CD8-positive, alpha-beta T cell (primary cell): ENCODE measurements at regions of chr11 and their contacts with region 1.

Region 1: GRCh38 chr11:535519-536454 is at the start of gene HRAS:
- DNase-seq: peak; percentile 92 to 98 (median 97)
- ATAC-seq: peak; percentile 88
- H3K4me3 ChIP-seq: peak within 1 kb of the TSS; percentile 60 to 66
- H3K4me3 Mint-ChIP-seq: peak within 1 kb of the TSS; percentile 93
- H3K27ac ChIP-seq: peak within 1 kb of the TSS; percentile 73 to 89
- H3K27ac Mint-ChIP-seq: peak within 1 kb of the TSS; percentile 95
- H3K4me1 ChIP-seq: peaks cover 28% of the 10 kb centered on the region
- H3K4me1 Mint-ChIP-seq: peaks cover 24% of the 10 kb centered on the region
- H3K27me3 ChIP-seq: no peaks in the 10 kb centered on the region
- H3K27me3 Mint-ChIP-seq: no peaks in the 10 kb centered on the region
- CTCF ChIP-seq: no peak
- total RNA-seq, gene HRAS: 25.2 to 25.5 TPM

Region 2: GRCh38 chr11:236774-237767 is 298.7 kb before region 1 on chr11 and contains the start of gene PSMD13:
- CTCF ChIA-PET with region 1: no interaction called
- POLR2A ChIA-PET with region 1: no interaction called
- intact Hi-C with region 1: loop called in 1 of 2 experiments (anchors 1 kb)
- DNase-seq: peak; percentile 74 to 94 (median 88)
- ATAC-seq: peak; percentile 72
- H3K4me3 ChIP-seq: peak within 1 kb of the TSS; percentile 83 to 100
- H3K4me3 Mint-ChIP-seq: peak within 1 kb of the TSS; percentile 96
- H3K27ac ChIP-seq: peak within 1 kb of the TSS; percentile 99 to 100
- H3K27ac Mint-ChIP-seq: peak within 1 kb of the TSS; percentile 99
- H3K4me1 ChIP-seq: peaks cover 24% of the 10 kb centered on the region
- H3K4me1 Mint-ChIP-seq: peaks cover 59% of the 10 kb centered on the region
- H3K27me3 ChIP-seq: no peaks in the 10 kb centered on the region
- H3K27me3 Mint-ChIP-seq: no peaks in the 10 kb centered on the region
- CTCF ChIP-seq: no peak
- total RNA-seq, gene PSMD13: 74.3 to 82.8 TPM

Region 3: DNA sequence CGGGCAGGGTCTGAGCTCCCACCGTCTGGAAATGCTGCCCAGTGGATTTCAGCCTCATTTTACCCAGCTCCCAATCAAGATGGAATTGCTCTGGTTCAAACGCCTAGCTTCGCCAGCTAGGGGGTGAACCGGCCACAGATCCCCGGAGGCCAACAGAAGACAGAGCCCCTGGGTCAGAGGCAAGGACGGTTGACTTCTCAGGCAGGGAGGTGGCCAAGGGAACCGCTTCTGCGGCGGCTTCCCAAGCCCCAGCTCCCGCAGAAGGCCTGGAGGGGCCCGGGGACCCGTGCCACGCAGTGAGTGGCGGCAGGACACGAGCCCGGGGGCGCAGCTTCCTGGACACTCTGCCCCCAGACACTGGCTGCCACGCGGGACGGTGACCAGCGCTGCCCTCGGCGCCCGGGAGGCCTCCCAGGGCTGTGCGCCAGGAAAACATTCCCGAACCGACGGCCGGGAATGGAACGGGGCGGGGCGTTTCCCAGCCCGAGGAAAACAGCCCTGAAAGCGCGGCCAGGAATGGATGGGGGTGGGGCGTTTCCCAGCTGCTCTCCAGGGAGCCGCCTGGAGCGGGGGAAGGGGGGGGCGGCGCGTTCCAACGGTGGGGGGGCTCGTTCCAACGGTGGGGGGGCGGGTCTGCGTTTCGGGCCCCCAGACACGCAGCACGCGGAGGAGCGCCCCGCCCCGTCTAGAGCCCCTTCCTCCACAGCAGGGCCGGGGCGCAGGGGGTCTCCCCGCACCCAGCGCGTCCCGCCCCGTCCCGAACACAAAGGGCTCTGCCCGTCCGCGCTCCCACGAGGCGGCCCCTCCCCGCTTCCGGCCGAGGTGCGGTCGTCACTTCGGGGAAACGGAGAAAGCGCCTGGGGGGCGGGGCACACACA is 180.0 kb before region 1 on chr11:
- CTCF ChIA-PET with region 1: no interaction called
- POLR2A ChIA-PET with region 1: no interaction called
- intact Hi-C with region 1: no loop called
- DNase-seq: peak; percentile 64 to 94 (median 85)
- ATAC-seq: peak; percentile 61
- H3K4me3 ChIP-seq: peak overlapping the region; percentile 32 to 66
- H3K4me3 Mint-ChIP-seq: peak overlapping the region; percentile 84
- H3K27ac ChIP-seq: peak overlapping the region; percentile 76 to 86
- H3K27ac Mint-ChIP-seq: peak overlapping the region; percentile 95
- H3K4me1 ChIP-seq: peaks cover 43% of the 10 kb centered on the region
- H3K4me1 Mint-ChIP-seq: peaks cover 44% of the 10 kb centered on the region
- H3K27me3 ChIP-seq: no peaks in the 10 kb centered on the region
- H3K27me3 Mint-ChIP-seq: no peaks in the 10 kb centered on the region
- CTCF ChIP-seq: no peak

Region 4: DNA sequence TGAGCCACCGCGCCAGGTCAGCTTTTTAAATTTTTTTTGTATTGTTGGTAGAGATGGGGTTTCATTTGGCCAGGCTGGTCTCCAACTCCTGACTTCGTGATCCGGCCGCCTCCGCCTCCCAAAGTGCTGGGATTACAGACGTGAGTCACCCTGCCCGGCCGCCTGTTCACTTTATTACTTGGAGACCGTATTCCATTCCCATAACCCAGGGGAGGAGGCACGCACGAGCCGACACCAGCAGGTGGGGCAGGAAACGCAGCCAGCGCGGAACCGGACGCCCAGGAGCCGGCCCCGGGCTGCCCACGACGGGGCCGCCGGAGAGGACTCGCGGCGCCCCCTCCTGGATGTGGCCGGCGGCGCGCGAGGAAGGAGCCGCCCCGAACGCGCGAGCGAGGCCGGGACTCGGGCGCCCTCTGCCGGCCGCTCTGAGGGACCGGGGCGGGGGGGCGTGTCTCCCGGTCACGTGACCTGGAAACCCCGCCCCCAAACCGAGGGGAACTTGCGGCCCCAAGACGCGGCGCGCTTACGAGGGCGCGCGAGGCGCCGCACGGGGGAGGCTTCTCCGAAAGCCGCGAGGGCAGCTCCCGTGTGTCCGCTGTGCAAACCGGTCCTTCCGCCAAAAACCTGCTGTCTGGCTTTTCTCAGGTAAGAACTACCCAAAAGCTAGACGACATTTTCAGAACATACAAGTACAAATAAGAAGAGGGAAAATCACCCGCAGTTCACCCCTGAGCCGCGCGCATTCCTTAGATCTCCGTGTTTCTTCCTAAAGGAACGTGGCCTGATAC is 17.1 kb before region 1 on chr11:
- CTCF ChIA-PET with region 1: interaction called, 3 read pairs
- POLR2A ChIA-PET with region 1: no interaction called
- intact Hi-C with region 1: loop called in 1 of 2 experiments (anchors 1 kb)
- DNase-seq: peak; percentile 82 to 98 (median 92)
- ATAC-seq: peak; percentile 95
- H3K4me3 ChIP-seq: peak overlapping the region; percentile 43 to 46
- H3K4me3 Mint-ChIP-seq: peak overlapping the region; percentile 79
- H3K27ac ChIP-seq: peak overlapping the region in 1 of 2 experiments; percentile 59
- H3K27ac Mint-ChIP-seq: peak overlapping the region; percentile 81
- H3K4me1 ChIP-seq: peaks cover 4% of the 10 kb centered on the region
- H3K4me1 Mint-ChIP-seq: peaks cover 5% of the 10 kb centered on the region
- H3K27me3 ChIP-seq: no peaks in the 10 kb centered on the region
- H3K27me3 Mint-ChIP-seq: no peaks in the 10 kb centered on the region
- CTCF ChIP-seq: peak; percentile 99

Region 5: GRCh38 chr11:560305-561147 is 24.7 kb after region 1 on chr11 and contains the starts of genes LMNTD2 and RASSF7:
- CTCF ChIA-PET with region 1: interaction called, 3 read pairs
- POLR2A ChIA-PET with region 1: no interaction called
- intact Hi-C with region 1: loop called (anchors 1 to 2 kb)
- DNase-seq: peak; percentile 92 to 98 (median 95)
- ATAC-seq: peak; percentile 94
- H3K4me3 ChIP-seq: peak within 1 kb of the TSS; percentile 51 to 94
- H3K4me3 Mint-ChIP-seq: peak within 1 kb of the TSS; percentile 88
- H3K27ac ChIP-seq: peak within 1 kb of the TSS; percentile 51 to 76
- H3K27ac Mint-ChIP-seq: peak within 1 kb of the TSS; percentile 84
- H3K4me1 ChIP-seq: peaks cover 19% of the 10 kb centered on the region
- H3K4me1 Mint-ChIP-seq: peaks cover 18% of the 10 kb centered on the region
- H3K27me3 ChIP-seq: no peaks in the 10 kb centered on the region
- H3K27me3 Mint-ChIP-seq: no peaks in the 10 kb centered on the region
- CTCF ChIP-seq: no peak
- total RNA-seq, gene LMNTD2: 4.2 to 5.6 TPM
- total RNA-seq, gene RASSF7: 11.8 to 15.3 TPM

Region 6: DNA sequence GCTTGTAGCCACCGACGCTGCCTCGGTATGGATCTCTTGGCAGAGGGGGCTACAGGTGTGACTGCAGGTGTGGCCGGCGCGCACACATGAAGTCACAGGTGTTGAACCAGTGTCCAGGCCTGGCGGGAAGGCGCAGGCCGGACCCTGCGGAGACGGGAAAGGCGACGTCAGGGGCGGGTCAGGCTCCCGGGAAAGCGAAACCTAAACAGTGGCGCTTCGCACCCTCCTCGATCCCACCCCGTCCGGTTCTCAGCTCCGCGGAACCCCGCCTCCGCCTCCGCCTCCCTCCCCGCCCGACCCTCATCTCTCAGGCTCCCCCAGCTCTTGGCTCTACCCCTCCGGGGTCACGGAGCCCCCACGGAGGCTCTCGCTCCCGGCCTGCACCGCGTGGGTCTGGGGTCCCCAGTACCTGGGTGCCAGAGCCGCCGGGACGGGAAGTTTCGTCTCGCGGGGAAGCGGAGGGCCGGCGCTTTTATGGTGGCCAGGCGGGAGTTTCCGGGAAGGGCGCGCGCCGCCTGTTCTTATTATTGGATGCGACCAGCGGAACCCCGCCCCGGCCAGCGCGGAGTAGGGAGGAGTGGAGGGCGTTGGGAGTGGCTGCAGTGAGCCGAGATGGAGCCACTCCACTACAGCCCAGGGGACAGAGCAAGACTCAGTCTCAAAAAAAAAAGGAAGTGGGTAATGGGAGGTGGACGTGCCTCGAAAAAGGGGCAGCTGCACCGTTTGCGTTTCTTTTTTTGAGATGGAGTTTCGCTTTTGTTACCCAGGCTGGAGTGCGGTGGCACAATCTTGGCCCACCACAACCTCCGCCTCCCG is 79.9 kb after region 1 on chr11 and contains the start of gene IRF7:
- CTCF ChIA-PET with region 1: no interaction called
- POLR2A ChIA-PET with region 1: no interaction called
- intact Hi-C with region 1: loop called in 1 of 2 experiments (anchors 1 kb)
- DNase-seq: peak; percentile 65 to 92 (median 87)
- ATAC-seq: peak; percentile 72
- H3K4me3 ChIP-seq: peak within 1 kb of the TSS; percentile 84 to 92
- H3K4me3 Mint-ChIP-seq: peak within 1 kb of the TSS; percentile 92
- H3K27ac ChIP-seq: peak within 1 kb of the TSS; percentile 83 to 95
- H3K27ac Mint-ChIP-seq: peak within 1 kb of the TSS; percentile 94
- H3K4me1 ChIP-seq: peaks cover 30% of the 10 kb centered on the region
- H3K4me1 Mint-ChIP-seq: peaks cover 10% of the 10 kb centered on the region
- H3K27me3 ChIP-seq: no peaks in the 10 kb centered on the region
- H3K27me3 Mint-ChIP-seq: no peaks in the 10 kb centered on the region
- CTCF ChIP-seq: no peak
- total RNA-seq, gene IRF7: 102 to 106 TPM

Region 7: GRCh38 chr11:819129-819931 is 283.5 kb after region 1 on chr11:
- CTCF ChIA-PET with region 1: no interaction called
- POLR2A ChIA-PET with region 1: interaction called, 11 read pairs
- intact Hi-C with region 1: no loop called
- DNase-seq: peak; percentile 85 to 96 (median 92)
- ATAC-seq: peak; percentile 77
- H3K4me3 ChIP-seq: peak overlapping the region; percentile 67 to 94
- H3K4me3 Mint-ChIP-seq: peak overlapping the region; percentile 87
- H3K27ac ChIP-seq: peak overlapping the region; percentile 78 to 88
- H3K27ac Mint-ChIP-seq: peak overlapping the region; percentile 88
- H3K4me1 ChIP-seq: peaks cover 21% of the 10 kb centered on the region
- H3K4me1 Mint-ChIP-seq: peaks cover 11% of the 10 kb centered on the region
- H3K27me3 ChIP-seq: no peaks in the 10 kb centered on the region
- H3K27me3 Mint-ChIP-seq: no peaks in the 10 kb centered on the region
- CTCF ChIP-seq: no peak